Mammary epithelial cell (primary cell): ENCODE measurements at regions of chr4 and their contacts with region 1.

Region 1: GRCh38 chr4:145936142-145936996 is 2.3 kb downstream of the ZNF827 start:
- DNase-seq: peak; percentile 67
- H3K4me3 ChIP-seq: peak overlapping the region; percentile 84 to 91 (median 85)
- H3K27ac ChIP-seq: peak overlapping the region; percentile 74
- H3K4me1 ChIP-seq: peaks cover 20% of the 10 kb centered on the region
- H3K27me3 ChIP-seq: no peaks in the 10 kb centered on the region
- CTCF ChIP-seq: peak in 1 of 2 donors; percentile 40

Region 2: GRCh38 chr4:145808021-145808650 is 128.2 kb before region 1 on chr4:
- CTCF ChIA-PET with region 1: interaction called, 4 read pairs
- dilution Hi-C with region 1: no loop called
- in situ Hi-C with region 1: no loop called
- intact Hi-C with region 1: loop called (anchors 5 kb)
- DNase-seq: peak; percentile 99
- H3K4me3 ChIP-seq: peak overlapping the region in 1 of 3 experiments; percentile 21
- H3K27ac ChIP-seq: peak overlapping the region; percentile 98
- H3K4me1 ChIP-seq: peaks cover 48% of the 10 kb centered on the region
- H3K27me3 ChIP-seq: no peaks in the 10 kb centered on the region
- CTCF ChIP-seq: no peak

Region 3: DNA sequence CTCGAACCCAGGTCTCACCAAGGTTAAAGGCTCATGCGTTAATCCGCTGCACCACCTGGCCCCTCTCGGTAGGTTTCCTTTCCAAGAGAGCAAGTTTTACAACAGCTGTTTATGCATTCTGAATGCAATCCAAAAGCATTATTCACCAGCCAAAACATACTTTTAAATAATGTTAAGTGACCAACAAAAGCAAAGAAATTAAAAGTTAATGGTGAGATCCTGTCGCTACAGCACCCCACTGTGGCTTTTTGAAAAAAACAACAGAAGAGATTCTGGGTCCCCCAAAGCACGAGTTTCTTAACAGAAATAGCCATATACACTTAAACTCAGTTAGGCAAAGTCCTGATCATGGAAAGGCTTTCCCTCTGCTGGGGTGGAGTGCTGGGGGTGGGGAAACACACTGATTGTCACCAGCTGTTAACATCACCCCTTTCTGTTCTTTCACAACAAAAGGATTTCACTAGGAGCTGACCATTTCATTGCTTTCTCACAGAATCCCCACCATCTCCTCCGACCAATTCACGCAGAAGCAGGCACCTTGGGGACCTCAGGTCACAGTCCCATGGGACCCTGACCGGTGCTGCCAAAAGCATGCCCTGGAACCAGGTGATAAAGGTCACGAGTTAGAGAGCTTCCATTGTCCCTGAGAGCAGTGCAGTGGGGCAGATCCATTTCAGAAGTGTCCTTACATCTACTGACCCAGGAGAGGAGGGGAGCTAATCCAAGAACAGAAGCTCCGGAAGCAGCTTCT is 49.0 kb before region 1 on chr4:
- CTCF ChIA-PET with region 1: interaction called, 3 read pairs
- dilution Hi-C with region 1: no loop called
- in situ Hi-C with region 1: no loop called
- intact Hi-C with region 1: loop called (anchors 1 kb)
- DNase-seq: no peak
- H3K4me3 ChIP-seq: no peak overlapping the region
- H3K27ac ChIP-seq: no peak overlapping the region
- H3K4me1 ChIP-seq: peaks cover 4% of the 10 kb centered on the region
- H3K27me3 ChIP-seq: no peaks in the 10 kb centered on the region
- CTCF ChIP-seq: no peak

Region 4: DNA sequence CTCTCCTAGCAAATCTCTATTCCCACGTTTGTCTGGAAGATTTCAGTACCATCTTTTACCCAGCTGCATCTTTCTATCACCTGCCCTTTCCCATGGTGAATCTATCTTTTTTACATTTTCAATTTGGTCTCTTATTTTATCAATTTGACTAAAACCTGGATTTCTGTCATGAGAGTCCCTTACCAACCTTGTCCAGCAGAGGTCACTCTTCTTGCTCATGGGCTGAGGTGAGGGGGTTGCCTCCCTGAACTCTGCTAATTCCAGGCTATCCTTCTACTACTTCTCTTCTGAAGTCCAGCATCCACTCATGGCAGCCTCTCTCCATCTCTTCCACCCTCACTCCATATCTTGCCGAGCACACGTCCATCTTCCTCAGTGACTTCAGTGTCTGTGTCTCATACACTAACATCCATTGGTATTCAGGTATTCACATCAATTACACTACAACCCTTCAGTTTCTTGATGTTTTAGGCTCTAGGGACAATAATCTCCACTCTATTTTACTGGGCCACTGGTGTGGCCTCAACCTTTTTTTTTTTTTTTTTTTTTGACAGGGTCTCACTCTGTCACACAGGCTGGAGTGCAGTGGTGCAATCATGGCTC is 20.0 kb after region 1 on chr4:
- CTCF ChIA-PET with region 1: no interaction called
- dilution Hi-C with region 1: no loop called
- in situ Hi-C with region 1: no loop called
- intact Hi-C with region 1: loop called (anchors 1 kb)
- DNase-seq: peak; percentile 25
- H3K4me3 ChIP-seq: no peak overlapping the region
- H3K27ac ChIP-seq: no peak overlapping the region
- H3K4me1 ChIP-seq: peaks cover 27% of the 10 kb centered on the region
- H3K27me3 ChIP-seq: no peaks in the 10 kb centered on the region
- CTCF ChIP-seq: peak; percentile 71 to 76